ENCODE measurements at regions of chr3 and their contacts with region 1.

Region 1: GRCh38 chr3:138594150-138594934 is at the start of gene CEP70:
- DNase-seq: peak; percentile 94
- ATAC-seq: peak; percentile 97
- H3K4me3 ChIP-seq: peak within 1 kb of the TSS; percentile 75 to 88 (median 83)
- H3K27ac ChIP-seq: peak within 1 kb of the TSS; percentile 71
- H3K4me1 ChIP-seq: peaks cover 34% of the 10 kb centered on the region
- H3K27me3 ChIP-seq: no peaks in the 10 kb centered on the region; a peak in 1 of 5 replicates
- CTCF ChIP-seq: peak; percentile 96
- EP300 ChIP-seq: 0 out of 4 replicates have a peak, but pooled peaks of 1 of the 2 experiments have one; percentile 58
- POLR2A ChIP-seq: peak; percentile 76 to 88
- RAD21 ChIP-seq: peak; percentile 64
- total RNA-seq, gene CEP70: 22.3 and 24.4 TPM in 2 replicates

Region 2: DNA sequence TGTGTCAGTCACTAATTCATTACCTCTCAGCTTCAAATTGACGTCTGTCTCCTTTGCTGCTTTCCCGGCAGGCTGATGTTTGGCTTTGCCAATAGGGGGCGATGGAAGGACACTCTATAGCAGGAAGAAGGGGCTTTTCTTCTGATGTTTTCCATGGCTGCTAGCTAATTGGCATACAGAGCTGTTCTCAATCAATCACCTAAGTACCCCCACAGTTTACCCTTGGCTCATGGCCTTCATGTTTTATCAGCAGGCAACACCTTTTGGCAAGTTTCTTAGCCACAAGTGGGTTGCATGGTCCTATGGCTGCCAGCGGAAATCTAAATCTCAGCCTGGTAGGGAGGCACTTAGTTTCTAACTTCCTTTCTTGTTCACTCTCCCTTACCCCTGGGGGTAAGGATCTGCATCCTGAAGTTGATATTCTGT is 114.9 kb before region 1 on chr3:
- CTCF ChIA-PET with region 1: no interaction called
- POLR2A ChIA-PET with region 1: interaction called, 5 read pairs
- in situ Hi-C with region 1: no loop called
- intact Hi-C with region 1: loop called (anchors 2 kb)
- DNase-seq: peak; percentile 50
- ATAC-seq: peak; percentile 78
- H3K4me3 ChIP-seq: no peak overlapping the region
- H3K27ac ChIP-seq: no peak overlapping the region
- H3K4me1 ChIP-seq: no peaks in the 10 kb centered on the region
- H3K27me3 ChIP-seq: no peaks in the 10 kb centered on the region
- CTCF ChIP-seq: peak; percentile 84
- EP300 ChIP-seq: no peak
- POLR2A ChIP-seq: no peak
- RAD21 ChIP-seq: peak; percentile 61

Region 3: GRCh38 chr3:138686771-138687221 is 92.5 kb after region 1 on chr3:
- CTCF ChIA-PET with region 1: no interaction called
- POLR2A ChIA-PET with region 1: no interaction called
- in situ Hi-C with region 1: loop called (anchors 10 kb)
- intact Hi-C with region 1: loop called (anchors 5 kb)
- DNase-seq: peak; percentile 89
- ATAC-seq: peak; percentile 93
- H3K4me3 ChIP-seq: no peak overlapping the region
- H3K27ac ChIP-seq: peak overlapping the region; percentile 24
- H3K4me1 ChIP-seq: peaks cover 40% of the 10 kb centered on the region
- H3K27me3 ChIP-seq: no peaks in the 10 kb centered on the region
- CTCF ChIP-seq: no peak
- EP300 ChIP-seq: peak in 1 of 2 experiments; percentile 74; a peak in 2 of 4 replicates
- POLR2A ChIP-seq: no peak
- RAD21 ChIP-seq: no peak

Region 4: GRCh38 chr3:138862924-138863775 is 268.8 kb after region 1 on chr3:
- CTCF ChIA-PET with region 1: no interaction called
- POLR2A ChIA-PET with region 1: interaction called, 11 read pairs
- in situ Hi-C with region 1: no loop called
- intact Hi-C with region 1: no loop called
- DNase-seq: peak; percentile 97
- ATAC-seq: peak; percentile 95
- H3K4me3 ChIP-seq: peak overlapping the region; percentile 6 to 45 (median 11); a peak in 3 of 6 replicates
- H3K27ac ChIP-seq: peak overlapping the region; percentile 93
- H3K4me1 ChIP-seq: peaks cover 72% of the 10 kb centered on the region
- H3K27me3 ChIP-seq: no peaks in the 10 kb centered on the region
- CTCF ChIP-seq: peak; percentile 58
- EP300 ChIP-seq: peak; percentile 39 to 90; a peak in 3 of 4 replicates
- POLR2A ChIP-seq: peak; percentile 65 to 70
- RAD21 ChIP-seq: peak; percentile 41; the same call in 1 of the 2 replicates

Region 5: GRCh38 chr3:138923531-138923994 is 329.2 kb after region 1 on chr3:
- CTCF ChIA-PET with region 1: interaction called, 11 read pairs
- POLR2A ChIA-PET with region 1: interaction called, 4 read pairs
- in situ Hi-C with region 1: loop called (anchors 5 kb)
- intact Hi-C with region 1: loop called (anchors 1 kb)
- DNase-seq: peak; percentile 75
- ATAC-seq: peak; percentile 84
- H3K4me3 ChIP-seq: peak overlapping the region in 1 of 3 experiments; percentile 29; a peak in 1 of 6 replicates
- H3K27ac ChIP-seq: no peak overlapping the region
- H3K4me1 ChIP-seq: peaks cover 13% of the 10 kb centered on the region
- H3K27me3 ChIP-seq: peaks cover 0 to 4% of the 10 kb centered on the region in 2 experiments; a peak in 2 of 5 replicates
- CTCF ChIP-seq: peak; percentile 94
- EP300 ChIP-seq: no peak
- POLR2A ChIP-seq: no peak
- RAD21 ChIP-seq: peak; percentile 78